H1 (cell line): ENCODE measurements at regions of chr11 and their contacts with region 1.

Region 1: DNA sequence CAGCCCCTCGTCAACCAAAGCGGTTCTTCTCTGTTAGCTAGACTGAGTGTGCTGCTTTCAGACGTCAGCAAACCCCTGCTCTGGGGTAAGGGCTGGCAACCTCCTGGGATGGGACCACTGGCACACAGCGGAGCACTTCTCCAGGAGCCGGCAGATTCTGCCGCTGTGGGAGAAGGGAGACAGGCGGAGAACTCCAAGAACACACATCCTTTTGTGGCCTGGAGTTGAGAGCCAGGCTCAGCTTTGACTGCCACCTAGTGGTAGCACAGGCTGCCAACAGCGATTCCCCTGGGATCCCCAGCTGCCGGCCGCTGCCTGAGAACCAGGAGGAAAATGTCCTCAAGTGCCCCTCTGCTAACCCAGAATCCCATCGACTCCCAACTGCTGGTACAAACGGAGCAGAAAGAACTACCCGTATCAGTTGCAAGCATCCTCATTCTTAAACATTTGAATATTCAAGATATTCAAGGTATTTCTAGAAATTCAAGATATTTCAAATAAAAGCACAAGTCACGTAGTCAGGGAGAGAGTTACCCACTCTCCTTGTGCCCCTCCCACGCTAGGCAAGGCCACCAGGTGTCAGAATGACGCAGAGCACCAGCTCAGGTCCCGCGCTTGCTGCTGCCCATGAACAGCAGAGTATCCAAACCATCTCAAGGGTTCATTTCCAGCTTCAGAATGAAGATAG is 4.9 kb downstream of the LTO1 start:
- DNase-seq: peak in 1 of 2 experiments; percentile 90
- H3K4me3 ChIP-seq: no peak overlapping the region
- H3K27ac ChIP-seq: no peak overlapping the region
- H3K4me1 ChIP-seq: peaks cover 3 to 5% (median 4%) of the 10 kb centered on the region in 4 experiments
- H3K27me3 ChIP-seq: no peaks in the 10 kb centered on the region
- CTCF ChIP-seq: peak; percentile 87 to 99 (median 98)
- EP300 ChIP-seq: no peak
- POLR2A ChIP-seq: no peak
- RAD21 ChIP-seq: peak; percentile 88 to 89

Region 2: GRCh38 chr11:69311767-69312385 is 358.4 kb before region 1 on chr11:
- CTCF ChIA-PET with region 1: no interaction called
- POLR2A ChIA-PET with region 1: no interaction called
- DNase-seq: no peak
- H3K4me3 ChIP-seq: no peak overlapping the region
- H3K27ac ChIP-seq: no peak overlapping the region
- H3K4me1 ChIP-seq: peaks cover 0 to 3% (median 1%) of the 10 kb centered on the region in 4 experiments; a peak in 1 of 7 replicates
- H3K27me3 ChIP-seq: no peaks in the 10 kb centered on the region; a peak in 1 of 7 replicates
- CTCF ChIP-seq: no peak
- EP300 ChIP-seq: no peak
- POLR2A ChIP-seq: no peak
- RAD21 ChIP-seq: no peak

Region 3: DNA sequence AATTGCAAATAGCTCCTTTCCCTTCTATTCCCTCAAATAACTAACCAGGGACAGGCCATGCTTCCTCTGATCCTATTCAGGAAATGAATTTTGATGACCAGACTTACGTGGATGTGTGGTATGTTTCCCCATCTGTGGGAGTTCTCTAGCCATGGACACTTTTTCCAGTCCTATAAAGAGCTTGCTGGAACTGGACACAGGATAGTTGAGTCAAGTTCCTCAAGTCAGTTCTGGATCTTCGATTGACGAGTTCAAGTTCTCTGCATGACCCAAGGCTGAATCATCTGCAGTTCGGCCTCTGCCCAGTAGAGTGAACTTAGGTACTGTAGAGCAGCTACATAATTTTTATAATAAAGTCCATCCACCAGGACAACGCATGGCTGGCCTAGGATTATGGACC is 82.0 kb before region 1 on chr11:
- CTCF ChIA-PET with region 1: no interaction called
- POLR2A ChIA-PET with region 1: no interaction called
- DNase-seq: no peak
- H3K4me3 ChIP-seq: no peak overlapping the region
- H3K27ac ChIP-seq: no peak overlapping the region
- H3K4me1 ChIP-seq: no peaks in the 10 kb centered on the region
- H3K27me3 ChIP-seq: no peaks in the 10 kb centered on the region
- CTCF ChIP-seq: no peak
- EP300 ChIP-seq: no peak
- POLR2A ChIP-seq: no peak
- RAD21 ChIP-seq: no peak

Region 4: DNA sequence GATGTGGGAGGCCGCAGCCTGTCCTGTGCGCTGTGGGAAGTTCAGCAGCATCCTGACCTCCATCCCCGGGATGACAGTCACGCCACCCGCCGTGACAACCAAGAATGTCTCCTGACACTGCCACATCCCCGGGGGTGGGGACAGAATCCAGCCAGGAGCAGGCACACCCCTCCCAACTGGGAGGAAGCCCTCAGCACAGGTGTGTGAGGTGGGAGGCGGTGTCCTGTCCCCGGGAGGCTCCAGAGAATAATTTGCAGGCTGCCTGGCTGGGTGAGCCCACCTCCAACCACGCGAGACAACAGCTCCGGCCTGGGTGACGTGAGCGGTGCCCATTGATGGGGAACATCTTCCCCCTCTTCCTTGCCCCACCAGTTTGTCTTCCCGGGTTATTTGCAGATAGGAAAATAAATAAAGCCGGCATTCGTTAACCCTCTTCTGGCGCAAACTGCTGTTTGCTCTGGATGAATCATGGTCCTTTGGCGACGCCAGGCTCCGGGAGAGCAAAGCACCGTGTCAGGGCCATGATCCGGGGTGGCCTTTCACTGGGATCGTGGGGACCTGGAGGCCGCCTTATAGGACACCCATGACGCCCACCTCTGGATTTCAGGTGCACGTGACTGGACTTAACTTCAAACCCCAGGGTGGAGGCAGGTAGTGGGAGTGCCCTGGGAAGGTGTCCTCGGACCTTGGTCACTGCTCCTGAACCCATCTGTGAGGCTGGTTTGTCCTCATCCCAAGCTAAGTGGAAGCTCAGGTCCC is 15.6 kb before region 1 on chr11:
- CTCF ChIA-PET with region 1: interaction called, 81 read pairs
- POLR2A ChIA-PET with region 1: interaction called, 12 read pairs
- DNase-seq: no peak
- H3K4me3 ChIP-seq: no peak overlapping the region
- H3K27ac ChIP-seq: no peak overlapping the region
- H3K4me1 ChIP-seq: peaks cover 5 to 18% (median 13%) of the 10 kb centered on the region in 4 experiments
- H3K27me3 ChIP-seq: no peaks in the 10 kb centered on the region; a peak in 1 of 7 replicates
- CTCF ChIP-seq: no peak
- EP300 ChIP-seq: no peak
- POLR2A ChIP-seq: peak in 1 of 2 experiments; percentile 24; a peak in 1 of 3 replicates
- RAD21 ChIP-seq: no peak